HepG2 (cell line): ENCODE measurements at regions of chr12 and their contacts with region 1.

Region 1: GRCh38 chr12:55194382-55194781 is 26.4 kb upstream of the OR10A7 start:
- DNase-seq: no peak
- ATAC-seq: no peak
- H3K4me3 ChIP-seq: no peak overlapping the region
- H3K27ac ChIP-seq: no peak overlapping the region
- H3K4me1 ChIP-seq: no peaks in the 10 kb centered on the region
- H3K27me3 ChIP-seq: no peaks in the 10 kb centered on the region
- CTCF ChIP-seq: no peak
- EP300 ChIP-seq: no peak
- POLR2A ChIP-seq: no peak
- RAD21 ChIP-seq: no peak

Region 2: GRCh38 chr12:55043542-55043941 is 150.8 kb before region 1 on chr12:
- CTCF ChIA-PET with region 1: no interaction called
- POLR2A ChIA-PET with region 1: no interaction called
- in situ Hi-C with region 1: no loop called
- intact Hi-C with region 1: no loop called
- DNase-seq: no peak
- ATAC-seq: no peak
- H3K4me3 ChIP-seq: no peak overlapping the region
- H3K27ac ChIP-seq: no peak overlapping the region
- H3K4me1 ChIP-seq: no peaks in the 10 kb centered on the region
- H3K27me3 ChIP-seq: peaks cover 1 to 16% of the 10 kb centered on the region in 2 experiments; a peak in 3 of 5 replicates
- CTCF ChIP-seq: no peak
- EP300 ChIP-seq: no peak
- POLR2A ChIP-seq: no peak
- RAD21 ChIP-seq: no peak

Region 3: GRCh38 chr12:55619354-55620138 is 425.2 kb after region 1 on chr12:
- CTCF ChIA-PET with region 1: interaction called, 89 read pairs
- POLR2A ChIA-PET with region 1: no interaction called
- in situ Hi-C with region 1: loop called (anchors 10 kb)
- intact Hi-C with region 1: loop called (anchors 1 kb)
- DNase-seq: peak; percentile 92
- ATAC-seq: peak; percentile 97
- H3K4me3 ChIP-seq: no peak overlapping the region
- H3K27ac ChIP-seq: no peak overlapping the region
- H3K4me1 ChIP-seq: no peaks in the 10 kb centered on the region
- H3K27me3 ChIP-seq: no peaks in the 10 kb centered on the region
- CTCF ChIP-seq: peak; percentile 87
- EP300 ChIP-seq: no peak
- POLR2A ChIP-seq: no peak
- RAD21 ChIP-seq: peak; percentile 94